ENCODE measurements at regions of chr12 and their contacts with region 1.

Region 1: DNA sequence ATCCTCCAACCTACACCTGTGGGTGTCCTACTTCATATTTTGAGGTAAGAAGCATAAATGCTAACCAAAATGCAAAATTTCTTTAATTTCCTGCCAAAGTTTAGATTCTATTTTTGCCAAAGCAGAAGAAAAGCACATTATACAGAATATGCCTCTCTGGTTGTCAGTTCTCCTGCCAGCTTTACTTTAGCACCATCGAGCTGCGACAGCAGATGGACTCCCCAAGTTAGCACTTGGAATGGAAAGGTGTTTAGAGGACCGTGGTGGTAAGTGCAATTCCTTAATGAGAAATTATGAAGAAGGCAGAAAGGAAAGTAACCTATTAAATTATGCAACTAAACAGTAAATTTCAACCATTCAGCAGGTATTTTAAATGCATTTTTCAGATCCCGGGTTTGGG is 326.6 kb downstream of the RERGL start:
- DNase-seq: no peak
- H3K4me3 ChIP-seq: no peak overlapping the region
- H3K27ac ChIP-seq: no peak overlapping the region
- H3K4me1 ChIP-seq: no peaks in the 10 kb centered on the region
- H3K27me3 ChIP-seq: no peaks in the 10 kb centered on the region
- CTCF ChIP-seq: no peak

Region 2: DNA sequence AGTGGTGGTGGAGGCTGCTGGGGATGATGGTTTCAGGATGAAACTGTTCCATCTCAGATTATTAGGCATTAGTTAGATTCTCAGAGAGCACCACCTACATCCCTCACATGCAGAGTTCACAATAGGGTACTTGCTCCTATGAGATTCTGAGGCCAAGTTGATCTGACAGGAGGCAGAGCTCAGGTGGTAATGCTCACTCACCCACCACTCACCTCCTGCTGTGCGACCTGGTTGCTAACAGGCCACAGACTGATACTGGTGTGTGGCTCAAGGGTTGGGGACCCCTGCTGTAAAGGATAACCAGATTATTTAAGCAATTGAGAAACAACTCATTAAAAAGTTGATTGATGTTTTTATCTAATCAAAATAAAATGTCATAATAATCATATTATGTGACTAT is 78.1 kb after region 1 on chr12:
- intact Hi-C with region 1: loop called (anchors 5 kb)
- DNase-seq: no peak
- H3K4me3 ChIP-seq: no peak overlapping the region
- H3K27ac ChIP-seq: no peak overlapping the region
- H3K4me1 ChIP-seq: no peaks in the 10 kb centered on the region
- H3K27me3 ChIP-seq: no peaks in the 10 kb centered on the region
- CTCF ChIP-seq: no peak

Region 3: DNA sequence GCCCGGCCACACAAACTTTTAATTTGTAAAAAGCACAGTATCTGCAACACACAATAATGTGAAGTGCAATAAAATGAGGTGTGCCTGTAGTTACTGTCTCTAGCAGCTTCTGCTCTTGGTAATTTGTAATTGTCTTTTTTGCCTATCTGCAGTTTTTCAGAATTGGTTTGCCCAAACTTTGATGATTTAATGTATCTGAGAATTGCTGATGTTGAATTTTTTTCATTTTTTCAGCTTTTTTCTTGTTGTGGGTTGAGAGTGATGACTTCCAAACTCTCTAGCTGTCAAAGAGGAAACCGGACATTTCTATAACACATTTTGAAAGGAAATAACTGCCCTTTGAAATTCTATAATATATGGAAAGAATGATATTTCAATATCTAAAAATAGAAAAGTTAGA is 89.7 kb after region 1 on chr12:
- intact Hi-C with region 1: loop called (anchors 5 kb)
- DNase-seq: no peak
- H3K4me3 ChIP-seq: no peak overlapping the region
- H3K27ac ChIP-seq: no peak overlapping the region
- H3K4me1 ChIP-seq: no peaks in the 10 kb centered on the region
- H3K27me3 ChIP-seq: no peaks in the 10 kb centered on the region
- CTCF ChIP-seq: no peak